Aorta (tissue), 5 donors: ENCODE measurements at regions of chr9 and their contacts with region 1.

Region 1: DNA sequence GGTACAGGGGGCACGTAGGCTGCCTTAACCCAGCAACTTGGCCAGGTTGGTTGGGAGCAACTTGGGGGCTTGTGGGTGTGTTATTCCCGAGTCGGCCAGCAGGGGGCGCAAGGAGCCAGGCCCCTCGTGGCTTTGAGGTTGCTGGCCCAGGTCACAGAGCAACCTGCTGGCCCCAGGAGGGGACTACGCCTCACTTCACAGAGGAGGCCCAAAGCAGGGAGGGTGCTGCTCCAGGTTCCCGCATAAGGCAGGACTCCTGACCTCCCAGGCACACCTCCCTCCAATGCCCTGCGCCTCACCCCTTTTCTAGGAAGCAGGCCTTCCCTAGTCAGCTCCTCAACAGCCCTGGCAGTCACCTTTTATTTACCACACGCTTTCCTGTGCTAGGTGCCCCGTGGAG is 18.1 kb downstream of the KYAT1 start:
- DNase-seq: peak; percentile 79 to 94
- ATAC-seq: peak; percentile 91
- H3K4me3 ChIP-seq: no peak overlapping the region
- H3K27ac ChIP-seq: no peak overlapping the region
- H3K4me1 ChIP-seq: no peaks in the 10 kb centered on the region
- H3K27me3 ChIP-seq: no peaks in the 10 kb centered on the region

Region 2: DNA sequence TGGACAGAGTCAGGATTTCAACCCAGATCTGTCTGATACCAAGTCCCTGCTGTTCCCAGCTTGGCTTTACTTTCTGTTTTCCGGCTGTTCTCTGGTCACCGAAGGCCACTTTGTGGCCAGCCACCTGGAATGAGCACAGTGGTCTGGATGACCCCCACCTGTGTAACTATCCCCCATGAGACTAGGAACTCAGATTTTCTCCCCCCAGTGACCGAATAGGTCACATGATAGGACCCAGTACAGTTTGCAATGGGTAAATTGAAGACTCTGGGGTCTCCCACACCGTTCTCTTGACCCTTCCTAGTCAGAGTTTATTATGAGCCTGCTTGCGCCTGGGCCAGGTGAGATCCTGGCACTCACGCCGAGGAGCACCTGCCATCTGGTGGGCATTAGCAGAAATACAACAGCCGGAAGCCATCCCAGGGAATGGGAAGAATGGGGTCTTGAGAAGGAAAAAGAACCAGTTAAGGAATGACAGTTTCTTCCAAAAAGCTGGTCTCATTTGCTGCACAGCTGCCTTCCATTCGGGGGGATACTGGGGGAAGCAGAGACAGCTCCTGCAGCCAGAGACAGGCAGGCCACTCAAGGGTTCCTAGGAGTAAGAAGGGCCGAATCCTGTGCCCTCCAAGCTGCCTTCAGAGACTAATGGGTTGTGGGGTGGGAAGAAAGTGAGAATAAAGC is 64.2 kb after region 1 on chr9:
- intact Hi-C with region 1: loop called (anchors 1 to 5 kb)
- DNase-seq: no peak
- ATAC-seq: peak; percentile 86
- H3K4me3 ChIP-seq: no peak overlapping the region
- H3K27ac ChIP-seq: no peak overlapping the region
- H3K4me1 ChIP-seq: no peaks in the 10 kb centered on the region
- H3K27me3 ChIP-seq: no peaks in the 10 kb centered on the region

Region 3: GRCh38 chr9:129006328-129007034 is 142.8 kb after region 1 on chr9:
- intact Hi-C with region 1: loop called in 1 of 2 experiments (anchors 10 kb)
- DNase-seq: peak; percentile 65 to 85
- ATAC-seq: peak; percentile 85
- H3K4me3 ChIP-seq: no peak overlapping the region
- H3K27ac ChIP-seq: peak overlapping the region in 1 of 2 donors; percentile 1
- H3K4me1 ChIP-seq: no peaks in the 10 kb centered on the region
- H3K27me3 ChIP-seq: no peaks in the 10 kb centered on the region